ENCODE measurements at regions of chr6 and their contacts with region 1.

Region 1: DNA sequence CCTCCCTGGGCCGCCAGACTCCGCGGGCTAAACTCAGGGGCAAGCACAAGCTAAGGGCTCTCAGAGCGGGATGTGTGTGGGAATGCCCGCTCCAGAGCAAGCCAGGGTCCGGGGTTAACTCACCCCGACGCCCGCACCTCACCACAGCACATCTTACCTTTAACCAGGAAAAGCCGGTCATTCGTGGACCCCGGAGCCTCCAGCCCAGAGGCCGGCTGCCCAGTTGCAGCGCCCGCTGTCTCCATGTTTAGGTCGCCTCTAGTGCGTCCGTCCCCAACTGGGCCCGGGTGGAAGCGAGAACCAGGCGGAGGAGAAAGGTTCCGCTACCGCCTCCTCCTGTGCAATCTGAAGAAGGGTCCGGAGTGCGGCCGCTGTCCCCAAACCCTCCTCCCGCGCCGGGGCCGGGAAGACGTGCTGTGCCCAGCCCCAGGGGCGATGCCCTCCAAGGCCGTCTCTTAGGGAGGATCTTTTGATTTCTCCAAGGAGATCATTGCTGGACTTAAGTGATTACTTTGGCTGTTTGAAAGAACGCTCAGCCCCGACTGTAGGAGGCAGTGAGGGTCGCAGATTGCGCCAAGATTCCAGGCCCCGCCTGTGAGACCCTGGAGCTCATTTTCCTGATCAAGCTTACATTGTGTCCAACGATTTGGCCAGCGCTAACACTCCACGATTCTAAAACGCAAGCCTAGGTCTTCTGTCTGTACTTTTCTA is at the start of gene TMEM242:
- DNase-seq: peak; percentile 90 to 96 (median 93)
- ATAC-seq: peak; percentile 92 to 98 (median 96)
- H3K4me3 ChIP-seq: peak within 1 kb of the TSS; percentile 47 to 90 (median 75)
- H3K27ac ChIP-seq: peak within 1 kb of the TSS; percentile 67 to 97 (median 96)
- H3K4me1 ChIP-seq: peaks cover 0 to 47% (median 20%) of the 10 kb centered on the region in 12 donors
- H3K27me3 ChIP-seq: no peaks in the 10 kb centered on the region
- CTCF ChIP-seq: peak; percentile 12 to 50 (median 30)
- POLR2A ChIP-seq: peak in 1 of 2 donors; percentile 59
- total RNA-seq, gene TMEM242: 5.9 to 18.3 (median 13.2) TPM

Region 2: GRCh38 chr6:157274471-157275226 is 48.8 kb before region 1 on chr6:
- intact Hi-C with region 1: no loop called
- DNase-seq: peak; percentile 77 to 91 (median 82)
- ATAC-seq: peak; percentile 74 to 98 (median 94)
- H3K4me3 ChIP-seq: peak overlapping the region; percentile 28 to 80 (median 64)
- H3K27ac ChIP-seq: peak overlapping the region; percentile 51 to 90 (median 81)
- H3K4me1 ChIP-seq: peaks cover 0 to 28% (median 15%) of the 10 kb centered on the region in 12 donors
- H3K27me3 ChIP-seq: no peaks in the 10 kb centered on the region
- CTCF ChIP-seq: peak; percentile 27 to 98 (median 88)
- POLR2A ChIP-seq: peak in 1 of 2 donors; percentile 40

Region 3: GRCh38 chr6:157597446-157598312 is 274.3 kb after region 1 on chr6:
- intact Hi-C with region 1: loop called in 7 of 10 experiments (anchors 5 to 10 kb)
- DNase-seq: peak in 2 of 5 donors; percentile 44 to 51
- ATAC-seq: peak; percentile 32 to 72 (median 65)
- H3K4me3 ChIP-seq: no peak overlapping the region
- H3K27ac ChIP-seq: peak overlapping the region in 1 of 12 donors; percentile 33
- H3K4me1 ChIP-seq: peaks cover 0 to 10% (median 2%) of the 10 kb centered on the region in 12 donors
- H3K27me3 ChIP-seq: no peaks in the 10 kb centered on the region
- CTCF ChIP-seq: peak; percentile 24 to 67 (median 52)
- POLR2A ChIP-seq: no peak

Measured in heart left ventricle (tissue), 16 donors.